Thyroid gland (tissue), 4 donors: ENCODE measurements at regions of chr22 and their contacts with region 1.

Region 1: GRCh38 chr22:19629720-19630419 is 84.4 kb upstream of the SEPTIN5 start:
- DNase-seq: peak; percentile 83 to 86
- H3K4me3 ChIP-seq: no peak overlapping the region
- H3K27ac ChIP-seq: no peak overlapping the region
- H3K4me1 ChIP-seq: no peaks in the 10 kb centered on the region
- H3K27me3 ChIP-seq: no peaks in the 10 kb centered on the region
- CTCF ChIP-seq: peak; percentile 40 to 94 (median 89)
- POLR2A ChIP-seq: no peak

Region 2: DNA sequence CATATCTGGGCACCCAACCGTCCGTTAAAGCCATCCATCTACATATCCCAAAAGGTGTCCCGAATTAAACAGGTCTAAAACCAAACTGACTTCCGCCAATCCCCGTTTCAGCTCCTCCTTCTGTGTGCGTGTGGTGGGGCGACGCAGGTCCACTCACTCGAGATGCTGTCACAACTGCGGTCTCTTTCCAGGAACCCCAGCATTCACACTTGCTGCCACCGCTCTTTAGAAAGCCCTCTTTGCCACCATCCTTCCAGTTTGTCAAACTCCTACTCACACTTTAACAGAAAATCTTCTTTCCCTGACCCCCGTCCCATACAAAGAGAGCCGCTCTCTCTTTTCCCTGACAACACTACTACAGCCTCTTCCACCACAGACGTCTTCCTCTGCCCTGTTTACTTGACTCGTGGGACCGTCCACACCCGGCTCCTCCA is 485.9 kb before region 1 on chr22:
- intact Hi-C with region 1: loop called (anchors 10 kb)
- DNase-seq: no peak
- H3K4me3 ChIP-seq: peak overlapping the region; percentile 70 to 85 (median 81)
- H3K27ac ChIP-seq: peak overlapping the region in 2 of 3 donors; percentile 43 to 61
- H3K4me1 ChIP-seq: peaks cover 5 to 9% of the 10 kb centered on the region in 2 donors
- H3K27me3 ChIP-seq: peaks cover 2% of the 10 kb centered on the region
- CTCF ChIP-seq: no peak
- POLR2A ChIP-seq: no peak

Region 3: DNA sequence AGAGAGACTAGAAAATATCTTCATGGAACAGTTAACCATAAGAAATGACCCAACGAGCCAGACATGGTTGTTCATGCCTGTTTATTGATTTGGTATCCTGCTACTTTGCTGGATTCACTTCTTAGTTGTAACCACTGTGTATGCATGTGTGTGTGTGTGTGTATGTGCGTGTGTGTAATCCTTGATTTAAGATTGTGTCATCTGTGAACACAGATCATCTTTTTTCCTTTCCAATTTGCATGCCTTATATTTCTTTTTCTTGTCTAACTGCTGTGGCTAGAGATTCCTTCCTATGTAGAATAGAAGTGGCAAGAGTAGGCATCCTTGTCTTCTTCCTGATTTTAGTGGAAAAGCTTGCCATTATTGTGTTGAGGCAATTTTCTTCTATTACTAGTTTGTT is 322.0 kb before region 1 on chr22:
- intact Hi-C with region 1: loop called (anchors 10 kb)
- DNase-seq: no peak
- H3K4me3 ChIP-seq: no peak overlapping the region
- H3K27ac ChIP-seq: no peak overlapping the region
- H3K4me1 ChIP-seq: no peaks in the 10 kb centered on the region
- H3K27me3 ChIP-seq: no peaks in the 10 kb centered on the region
- CTCF ChIP-seq: no peak
- POLR2A ChIP-seq: no peak

Region 4: GRCh38 chr22:19495562-19496323 is 134.1 kb before region 1 on chr22:
- intact Hi-C with region 1: loop called (anchors 5 kb)
- DNase-seq: no peak
- H3K4me3 ChIP-seq: no peak overlapping the region
- H3K27ac ChIP-seq: no peak overlapping the region
- H3K4me1 ChIP-seq: no peaks in the 10 kb centered on the region
- H3K27me3 ChIP-seq: no peaks in the 10 kb centered on the region
- CTCF ChIP-seq: peak in 3 of 6 experiments; percentile 21 to 41 (median 27)
- POLR2A ChIP-seq: no peak

Region 5: GRCh38 chr22:19717691-19718455 is 88.0 kb after region 1 on chr22:
- intact Hi-C with region 1: no loop called
- DNase-seq: peak; percentile 68 to 74
- H3K4me3 ChIP-seq: peak overlapping the region in 1 of 3 donors; percentile 36
- H3K27ac ChIP-seq: peak overlapping the region in 1 of 3 donors; percentile 15
- H3K4me1 ChIP-seq: peaks cover 15 to 31% of the 10 kb centered on the region in 2 donors
- H3K27me3 ChIP-seq: no peaks in the 10 kb centered on the region
- CTCF ChIP-seq: peak; percentile 43 to 99 (median 98)
- POLR2A ChIP-seq: no peak